ENCODE measurements at regions of chr17 and their contacts with region 1.

Region 1: GRCh38 chr17:57855391-57856035 is 5.7 kb upstream of the MRPS23 start:
- DNase-seq: peak in 1 of 6 donors; percentile 7
- ATAC-seq: peak in 1 of 4 donors; percentile 13
- H3K4me3 ChIP-seq: no peak overlapping the region
- H3K27ac ChIP-seq: no peak overlapping the region
- H3K4me1 ChIP-seq: peaks cover 21 to 35% (median 27%) of the 10 kb centered on the region in 3 donors
- H3K27me3 ChIP-seq: no peaks in the 10 kb centered on the region
- CTCF ChIP-seq: no peak

Region 2: GRCh38 chr17:57995076-57995956 is 139.8 kb after region 1 on chr17:
- intact Hi-C with region 1: loop called in 2 of 3 experiments (anchors 5 kb)
- DNase-seq: peak in 5 of 6 donors; percentile 45 to 74 (median 55)
- ATAC-seq: peak; percentile 74 to 96 (median 92)
- H3K4me3 ChIP-seq: no peak overlapping the region
- H3K27ac ChIP-seq: no peak overlapping the region
- H3K4me1 ChIP-seq: peaks cover 0 to 7% (median under 1%) of the 10 kb centered on the region in 3 donors
- H3K27me3 ChIP-seq: no peaks in the 10 kb centered on the region
- CTCF ChIP-seq: peak; percentile 18 to 49 (median 31)

Measured in pancreas (tissue), 10 donors.